K562 (cell line): ENCODE measurements at regions of chr11 and their contacts with region 1.

Region 1: DNA sequence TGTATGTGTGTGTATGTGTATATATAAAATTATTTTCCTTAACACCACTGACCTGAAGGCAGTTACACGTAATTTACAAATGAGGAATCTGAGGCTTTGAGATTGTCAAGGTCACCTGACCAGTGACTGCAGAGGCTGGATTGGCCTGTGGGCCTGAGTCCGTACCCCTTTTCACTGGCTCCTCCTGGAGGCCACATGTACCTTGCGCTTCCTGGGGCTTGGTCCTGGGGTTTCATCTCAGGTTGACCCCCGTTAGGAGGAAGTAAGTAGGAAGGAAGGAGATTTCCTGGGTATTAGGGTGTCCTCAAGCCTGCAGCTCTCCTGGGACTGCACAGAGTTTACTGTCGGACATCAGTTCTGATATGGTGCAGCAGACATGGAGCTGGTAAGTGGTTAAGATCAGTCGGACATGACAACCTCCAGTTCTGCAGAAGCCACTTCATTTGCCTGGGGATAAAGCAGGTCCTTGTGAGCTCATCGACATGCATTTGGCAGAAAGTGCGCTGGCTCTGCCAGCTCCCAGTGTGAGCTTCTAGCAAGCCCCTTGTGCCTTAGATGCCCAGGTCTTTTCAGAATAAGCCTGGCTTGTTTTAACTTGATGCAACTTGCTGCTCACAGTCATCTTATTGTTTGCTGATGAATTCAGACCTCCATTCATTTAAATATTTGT is 36.6 kb downstream of the ST3GAL4 start:
- DNase-seq: peak; percentile 26 to 52 (median 42)
- ATAC-seq: peak; percentile 93
- H3K4me3 ChIP-seq: no peak overlapping the region
- H3K27ac ChIP-seq: no peak overlapping the region
- H3K4me1 ChIP-seq: no peaks in the 10 kb centered on the region; a peak in 4 of 5 replicates
- H3K27me3 ChIP-seq: no peaks in the 10 kb centered on the region
- CTCF ChIP-seq: peak; percentile 60 to 68 (median 67)
- EP300 ChIP-seq: no peak
- POLR2A ChIP-seq: no peak
- RAD21 ChIP-seq: peak; percentile 56 to 81; a peak in 3 of 4 replicates

Region 2: GRCh38 chr11:126345759-126346585 is 46.1 kb before region 1 on chr11:
- CTCF ChIA-PET with region 1: no interaction called
- POLR2A ChIA-PET with region 1: no interaction called
- in situ Hi-C with region 1: no loop called
- intact Hi-C with region 1: loop called (anchors 5 kb)
- DNase-seq: peak; percentile 81 to 95 (median 86)
- ATAC-seq: peak; percentile 87
- H3K4me3 ChIP-seq: no peak overlapping the region
- H3K27ac ChIP-seq: peak overlapping the region; percentile 94
- H3K4me1 ChIP-seq: peaks cover 57 to 82% of the 10 kb centered on the region in 2 experiments
- H3K27me3 ChIP-seq: no peaks in the 10 kb centered on the region
- CTCF ChIP-seq: no peak
- EP300 ChIP-seq: peak; percentile 92
- POLR2A ChIP-seq: peak; percentile 59; the same call in 1 of the 2 replicates
- RAD21 ChIP-seq: 0 out of 4 replicates have a peak, but pooled peaks have one; percentile 7 to 12

Region 3: DNA sequence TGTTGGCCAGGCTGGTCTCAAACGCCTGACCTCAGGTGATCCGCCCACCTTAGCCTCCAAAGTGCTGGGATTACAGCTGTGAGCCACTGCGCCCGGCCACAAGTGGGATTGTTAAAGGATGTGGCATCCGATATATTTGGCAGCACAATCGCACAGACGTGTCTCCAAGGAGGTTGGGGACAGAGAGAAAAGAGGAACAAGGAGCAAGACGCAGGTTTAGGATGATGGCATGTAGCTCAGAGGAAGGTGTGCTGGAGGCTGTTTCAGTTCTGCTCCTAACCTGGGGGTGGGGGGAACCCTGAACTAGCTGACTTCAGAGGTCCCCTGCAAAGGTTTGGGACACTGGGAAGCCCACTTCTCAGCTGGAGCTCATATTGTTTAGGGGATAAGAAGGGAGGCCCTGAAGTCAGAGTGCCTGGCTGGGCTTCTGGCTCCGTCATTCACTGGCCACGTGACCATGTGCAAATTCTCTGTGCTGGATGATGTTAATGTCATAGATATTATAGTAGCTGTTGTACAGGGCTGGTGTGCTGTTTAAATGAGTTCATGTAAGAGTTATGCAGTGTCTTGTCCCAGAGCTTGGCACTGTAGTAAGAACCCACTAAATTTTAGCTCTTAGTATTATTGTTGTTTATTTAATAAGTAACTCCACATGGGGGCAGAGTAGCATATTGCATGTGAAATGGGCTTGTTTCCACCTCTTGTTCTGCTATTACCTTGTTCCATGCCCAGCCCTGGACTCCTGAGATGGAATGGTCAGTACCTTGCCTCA is 93.1 kb after region 1 on chr11:
- CTCF ChIA-PET with region 1: no interaction called
- POLR2A ChIA-PET with region 1: no interaction called
- in situ Hi-C with region 1: no loop called
- intact Hi-C with region 1: no loop called
- DNase-seq: no peak
- ATAC-seq: no peak; the same call in 2 of the 3 replicates
- H3K4me3 ChIP-seq: no peak overlapping the region
- H3K27ac ChIP-seq: no peak overlapping the region
- H3K4me1 ChIP-seq: peaks cover 3 to 4% of the 10 kb centered on the region in 2 experiments; a peak in 2 of 5 replicates
- H3K27me3 ChIP-seq: peaks cover 6 to 53% of the 10 kb centered on the region in 2 experiments; a peak in 4 of 5 replicates
- CTCF ChIP-seq: peak in 2 of 3 experiments; percentile 19 to 22; a peak in 1 of 6 replicates
- EP300 ChIP-seq: no peak
- POLR2A ChIP-seq: no peak
- RAD21 ChIP-seq: no peak; a peak in 1 of 4 replicates